ENCODE measurements at regions of chr19 and their contacts with region 1.

Region 1: DNA sequence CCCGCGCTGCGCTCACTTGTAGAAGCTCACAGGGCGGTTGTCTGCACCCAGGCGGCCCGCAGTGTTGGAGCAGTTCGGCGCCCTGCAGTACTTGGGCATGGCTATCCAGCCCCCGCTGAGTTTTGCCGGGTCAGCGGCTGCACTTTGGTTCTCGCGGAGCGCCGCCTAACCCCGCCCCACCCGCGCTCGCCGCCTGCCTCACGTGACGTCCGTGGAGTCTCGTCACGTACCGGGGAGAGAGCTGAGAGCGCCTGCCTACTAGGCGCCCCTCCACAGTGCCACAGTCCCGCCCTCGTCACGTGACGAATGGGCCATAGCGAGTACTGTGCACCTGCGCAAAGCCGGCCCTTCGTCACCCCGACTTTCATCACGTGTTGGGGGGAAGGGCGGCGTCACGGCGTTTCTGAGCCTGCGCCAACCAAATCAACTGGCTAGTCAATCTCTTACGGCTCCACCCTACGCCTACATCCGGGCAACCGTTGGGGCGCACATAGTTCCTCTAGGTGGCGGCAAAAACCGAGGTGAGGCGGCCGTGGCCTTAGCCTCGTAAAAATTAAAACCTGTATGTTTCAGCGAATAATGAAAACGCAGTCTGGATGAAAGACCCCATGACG is at the start of gene THAP8:
- DNase-seq: peak; percentile 99
- H3K4me3 ChIP-seq: peak within 1 kb of the TSS; percentile 52 to 65 (median 52)
- H3K27ac ChIP-seq: peak within 1 kb of the TSS; percentile 85
- H3K4me1 ChIP-seq: peaks cover 8% of the 10 kb centered on the region
- H3K27me3 ChIP-seq: no peaks in the 10 kb centered on the region
- CTCF ChIP-seq: peak; percentile 32 to 52
- total RNA-seq, gene THAP8: 2.3 to 2.6 TPM

Region 2: GRCh38 chr19:35963514-35963913 is 90.7 kb before region 1 on chr19:
- CTCF ChIA-PET with region 1: no interaction called
- dilution Hi-C with region 1: loop called (anchors 5 kb)
- in situ Hi-C with region 1: no loop called
- intact Hi-C with region 1: no loop called
- DNase-seq: peak; percentile 39
- H3K4me3 ChIP-seq: no peak overlapping the region
- H3K27ac ChIP-seq: no peak overlapping the region
- H3K4me1 ChIP-seq: peaks cover 11% of the 10 kb centered on the region
- H3K27me3 ChIP-seq: peaks cover 13% of the 10 kb centered on the region
- CTCF ChIP-seq: no peak

Region 3: DNA sequence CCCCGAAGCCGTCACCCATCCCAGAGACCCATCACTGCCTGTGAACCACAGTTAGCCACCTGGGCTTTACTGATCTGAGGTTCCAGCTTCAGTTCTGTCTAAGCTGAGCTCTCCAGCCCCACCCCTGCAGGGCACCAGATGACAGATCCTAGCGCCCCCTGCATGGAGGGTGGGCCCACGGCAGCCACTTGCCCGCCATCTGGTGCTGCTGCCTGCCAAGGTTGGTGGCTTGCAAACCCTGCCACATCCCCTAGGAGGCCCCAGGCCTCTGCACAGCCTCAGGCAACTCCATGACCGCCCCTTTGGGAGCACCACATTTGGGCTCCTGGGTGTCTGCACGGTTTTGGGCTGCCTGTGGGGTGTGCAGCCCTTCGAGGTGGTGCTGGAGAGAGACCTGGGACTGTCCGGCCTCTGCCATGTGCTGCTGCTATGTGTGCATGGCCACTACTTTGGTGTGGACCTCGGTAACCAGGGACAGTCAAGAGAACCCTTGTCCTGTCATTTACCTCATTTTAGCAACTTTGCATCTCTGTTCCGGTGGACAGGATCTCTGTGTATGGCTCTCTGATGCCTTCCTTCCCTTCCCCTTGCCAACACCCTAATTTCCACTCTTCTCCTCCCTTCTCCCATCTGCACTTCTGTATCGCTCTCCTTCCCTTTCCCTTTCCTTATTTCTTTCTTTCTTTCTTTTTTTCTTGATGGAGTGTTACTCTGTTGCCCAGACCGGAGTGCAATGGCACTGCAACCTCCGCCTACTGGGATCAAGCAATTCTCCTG is 76.6 kb before region 1 on chr19:
- CTCF ChIA-PET with region 1: no interaction called
- dilution Hi-C with region 1: no loop called
- in situ Hi-C with region 1: no loop called
- intact Hi-C with region 1: no loop called
- DNase-seq: no peak
- H3K4me3 ChIP-seq: no peak overlapping the region
- H3K27ac ChIP-seq: no peak overlapping the region
- H3K4me1 ChIP-seq: no peaks in the 10 kb centered on the region
- H3K27me3 ChIP-seq: no peaks in the 10 kb centered on the region
- CTCF ChIP-seq: no peak

Region 4: DNA sequence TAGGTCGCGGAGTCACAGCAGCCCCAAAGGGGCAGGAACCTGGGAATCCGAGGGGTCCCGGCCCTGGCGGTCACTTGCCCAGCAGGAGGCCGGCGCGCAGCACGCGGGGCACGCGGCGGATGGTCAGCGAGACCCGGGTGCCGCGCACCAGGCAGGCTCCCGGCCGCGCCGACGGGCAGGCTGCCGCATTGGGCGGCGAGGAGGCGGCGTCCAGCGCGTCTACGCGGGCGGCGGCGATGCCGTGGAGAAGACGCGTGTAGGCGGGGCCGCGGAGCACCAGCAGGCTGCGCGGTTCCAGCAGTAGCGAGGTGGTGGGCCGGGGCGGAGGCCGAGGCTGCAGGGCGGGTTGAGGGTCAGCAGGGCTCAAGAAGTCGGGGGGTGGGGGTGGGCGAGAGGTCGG is 45.0 kb before region 1 on chr19:
- CTCF ChIA-PET with region 1: no interaction called
- dilution Hi-C with region 1: loop called (anchors 5 kb)
- in situ Hi-C with region 1: no loop called
- intact Hi-C with region 1: loop called (anchors 1 kb)
- DNase-seq: no peak
- H3K4me3 ChIP-seq: peak overlapping the region; percentile 33 to 44 (median 33)
- H3K27ac ChIP-seq: no peak overlapping the region
- H3K4me1 ChIP-seq: peaks cover 10% of the 10 kb centered on the region
- H3K27me3 ChIP-seq: no peaks in the 10 kb centered on the region
- CTCF ChIP-seq: peak in 1 of 2 donors; percentile 7

Region 5: GRCh38 chr19:36106441-36106840 is 52.2 kb after region 1 on chr19:
- CTCF ChIA-PET with region 1: no interaction called
- dilution Hi-C with region 1: loop called (anchors 5 kb)
- in situ Hi-C with region 1: no loop called
- intact Hi-C with region 1: no loop called
- DNase-seq: no peak
- H3K4me3 ChIP-seq: no peak overlapping the region
- H3K27ac ChIP-seq: no peak overlapping the region
- H3K4me1 ChIP-seq: peaks cover 19% of the 10 kb centered on the region
- H3K27me3 ChIP-seq: no peaks in the 10 kb centered on the region
- CTCF ChIP-seq: no peak

Region 6: GRCh38 chr19:36528194-36528920 is 474.1 kb after region 1 on chr19 and contains the start of gene ZNF260:
- CTCF ChIA-PET with region 1: no interaction called
- dilution Hi-C with region 1: no loop called
- in situ Hi-C with region 1: no loop called
- intact Hi-C with region 1: loop called (anchors 1 kb)
- DNase-seq: peak; percentile 96
- H3K4me3 ChIP-seq: peak within 1 kb of the TSS; percentile 47 to 99 (median 86)
- H3K27ac ChIP-seq: peak within 1 kb of the TSS; percentile 88
- H3K4me1 ChIP-seq: peaks cover 5% of the 10 kb centered on the region
- H3K27me3 ChIP-seq: no peaks in the 10 kb centered on the region
- CTCF ChIP-seq: peak in 1 of 2 donors; percentile 9
- total RNA-seq, gene ZNF260: 11.8 to 21.0 TPM

Measured in mammary epithelial cell (primary cell).